H1 (cell line): ENCODE measurements at regions of chr2 and their contacts with region 1.

Region 1: GRCh38 chr2:73956231-73956865 is 28.4 kb upstream of the TET3 start:
- DNase-seq: no peak
- H3K4me3 ChIP-seq: no peak overlapping the region
- H3K27ac ChIP-seq: no peak overlapping the region
- H3K4me1 ChIP-seq: no peaks in the 10 kb centered on the region
- H3K27me3 ChIP-seq: no peaks in the 10 kb centered on the region
- CTCF ChIP-seq: peak in 1 of 3 experiments; percentile 8; a peak in 1 of 4 replicates
- EP300 ChIP-seq: no peak
- POLR2A ChIP-seq: no peak
- RAD21 ChIP-seq: no peak; a peak in 1 of 4 replicates

Region 2: GRCh38 chr2:73944714-73945113 is 11.6 kb before region 1 on chr2:
- CTCF ChIA-PET with region 1: interaction called, 14 read pairs
- POLR2A ChIA-PET with region 1: interaction called, 10 read pairs
- DNase-seq: no peak
- H3K4me3 ChIP-seq: no peak overlapping the region
- H3K27ac ChIP-seq: no peak overlapping the region
- H3K4me1 ChIP-seq: no peaks in the 10 kb centered on the region
- H3K27me3 ChIP-seq: no peaks in the 10 kb centered on the region
- CTCF ChIP-seq: no peak
- EP300 ChIP-seq: no peak
- POLR2A ChIP-seq: no peak
- RAD21 ChIP-seq: no peak

Region 3: GRCh38 chr2:74364533-74365505 is 408.5 kb after region 1 on chr2:
- CTCF ChIA-PET with region 1: no interaction called
- POLR2A ChIA-PET with region 1: no interaction called
- DNase-seq: no peak
- H3K4me3 ChIP-seq: no peak overlapping the region
- H3K27ac ChIP-seq: no peak overlapping the region
- H3K4me1 ChIP-seq: no peaks in the 10 kb centered on the region
- H3K27me3 ChIP-seq: no peaks in the 10 kb centered on the region
- CTCF ChIP-seq: no peak
- EP300 ChIP-seq: no peak
- POLR2A ChIP-seq: no peak
- RAD21 ChIP-seq: no peak